MCF 10A (cell line): ENCODE measurements at regions of chr5 and their contacts with region 1.

Region 1: DNA sequence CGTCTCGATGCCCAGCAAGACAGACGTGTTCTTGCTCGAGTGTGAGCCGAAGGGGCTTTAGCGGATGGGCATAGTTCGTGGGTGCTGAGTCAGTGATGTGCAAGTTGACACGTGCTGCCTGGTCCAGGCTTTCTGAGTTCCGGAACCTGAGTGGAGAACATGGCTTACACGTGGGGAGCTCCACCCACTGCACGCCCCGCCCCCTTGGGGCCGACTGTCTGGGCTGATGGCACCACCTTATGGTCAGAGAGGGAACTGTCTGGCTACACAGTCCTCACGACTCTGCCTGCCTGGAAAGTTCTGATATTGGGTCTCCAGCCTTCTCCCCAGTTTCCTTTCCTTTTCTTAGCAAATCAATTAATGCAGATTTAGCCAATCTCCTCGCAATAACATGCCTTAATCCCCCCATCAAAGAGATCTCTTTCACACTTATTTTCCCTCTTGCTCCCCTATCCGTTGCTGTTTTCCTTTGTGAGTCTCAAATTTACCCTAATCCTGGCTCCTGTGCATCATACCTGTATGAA is 3.8 kb upstream of the STC2 start:
- DNase-seq: peak; percentile 96
- H3K4me3 Mint-ChIP-seq: no peak overlapping the region
- H3K27ac Mint-ChIP-seq: peak overlapping the region; percentile 26
- H3K4me1 Mint-ChIP-seq: peaks cover 45% of the 10 kb centered on the region
- H3K27me3 Mint-ChIP-seq: no peaks in the 10 kb centered on the region
- CTCF ChIP-seq: peak; percentile 96

Region 2: GRCh38 chr5:173057062-173057924 is 274.7 kb before region 1 on chr5:
- CTCF ChIA-PET with region 1: interaction called, 3 read pairs
- POLR2A ChIA-PET with region 1: interaction called, 22 read pairs
- intact Hi-C with region 1: loop called (anchors 5 kb)
- DNase-seq: peak; percentile 100
- H3K4me3 Mint-ChIP-seq: peak overlapping the region; percentile 99
- H3K27ac Mint-ChIP-seq: peak overlapping the region; percentile 80
- H3K4me1 Mint-ChIP-seq: peaks cover 16% of the 10 kb centered on the region
- H3K27me3 Mint-ChIP-seq: no peaks in the 10 kb centered on the region
- CTCF ChIP-seq: no peak

Region 3: DNA sequence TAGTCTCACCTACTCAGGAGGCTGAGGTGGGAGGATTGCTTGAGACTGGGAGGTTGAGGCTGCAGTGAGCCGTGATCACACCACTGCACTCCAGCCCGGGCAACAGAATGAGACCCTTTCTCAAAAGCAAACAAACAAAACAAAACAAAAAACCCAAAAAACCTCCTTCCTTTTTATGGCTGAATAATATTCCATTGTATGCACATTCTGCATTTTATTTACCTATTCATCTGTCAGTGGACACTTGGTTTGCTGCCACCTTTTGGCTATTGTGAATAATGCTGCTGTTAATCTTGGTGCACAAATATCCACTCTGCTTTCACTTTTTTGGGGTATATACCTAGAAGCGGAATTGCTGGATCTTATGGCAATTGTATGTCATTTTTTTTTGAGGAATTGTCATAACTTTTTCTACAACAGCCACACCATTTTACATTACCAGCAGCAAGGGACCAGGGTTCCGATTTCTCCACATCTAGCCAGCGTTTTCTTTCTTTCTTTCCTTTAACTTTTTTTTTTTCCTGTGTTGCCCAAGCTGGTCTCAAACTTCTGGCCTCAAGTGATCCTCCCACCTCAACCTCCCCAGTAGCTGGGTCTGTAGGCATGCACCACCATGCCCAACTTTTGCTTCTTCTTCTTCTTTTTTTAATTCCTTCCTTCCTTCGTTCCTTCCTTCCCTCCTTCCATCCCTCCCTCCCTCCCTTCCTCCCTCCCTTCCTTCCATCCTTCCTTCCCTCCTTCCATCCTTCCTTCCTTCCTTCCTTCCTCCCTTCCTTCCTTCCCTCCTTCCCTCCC is 127.6 kb before region 1 on chr5:
- CTCF ChIA-PET with region 1: interaction called, 5 read pairs
- POLR2A ChIA-PET with region 1: interaction called, 12 read pairs
- intact Hi-C with region 1: no loop called
- DNase-seq: peak; percentile 67
- H3K4me3 Mint-ChIP-seq: no peak overlapping the region
- H3K27ac Mint-ChIP-seq: no peak overlapping the region
- H3K4me1 Mint-ChIP-seq: peaks cover 26% of the 10 kb centered on the region
- H3K27me3 Mint-ChIP-seq: peaks cover 33% of the 10 kb centered on the region
- CTCF ChIP-seq: peak; percentile 66

Region 4: DNA sequence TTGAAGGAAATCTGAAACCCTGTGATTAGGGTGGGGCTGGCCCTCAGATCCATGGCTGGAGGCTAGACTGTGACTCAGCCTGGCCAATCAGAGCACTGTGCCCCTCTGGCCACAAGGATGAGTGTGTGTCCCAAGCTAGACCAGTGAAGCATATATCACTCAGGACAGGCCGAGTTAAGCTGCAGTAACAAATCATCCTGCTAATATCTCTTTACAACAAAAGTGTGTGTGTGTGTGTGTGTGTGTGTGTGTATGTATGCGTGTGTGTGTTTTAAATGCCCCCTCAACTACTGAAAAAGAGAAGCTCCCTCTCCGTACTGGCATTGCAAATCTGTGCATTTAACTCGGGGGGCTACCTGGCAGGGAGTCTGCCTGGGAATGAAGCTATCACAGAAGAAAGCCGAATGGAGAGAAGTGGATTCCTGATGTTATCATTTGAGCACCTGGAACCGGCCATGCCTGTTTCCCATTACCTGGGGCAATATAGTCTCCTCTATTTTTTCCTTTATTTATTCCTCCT is 29.4 kb before region 1 on chr5:
- CTCF ChIA-PET with region 1: interaction called, 251 read pairs
- POLR2A ChIA-PET with region 1: interaction called, 164 read pairs
- intact Hi-C with region 1: no loop called
- DNase-seq: peak; percentile 95
- H3K4me3 Mint-ChIP-seq: peak overlapping the region; percentile 33
- H3K27ac Mint-ChIP-seq: peak overlapping the region; percentile 61
- H3K4me1 Mint-ChIP-seq: peaks cover 29% of the 10 kb centered on the region
- H3K27me3 Mint-ChIP-seq: no peaks in the 10 kb centered on the region
- CTCF ChIP-seq: no peak

Region 5: DNA sequence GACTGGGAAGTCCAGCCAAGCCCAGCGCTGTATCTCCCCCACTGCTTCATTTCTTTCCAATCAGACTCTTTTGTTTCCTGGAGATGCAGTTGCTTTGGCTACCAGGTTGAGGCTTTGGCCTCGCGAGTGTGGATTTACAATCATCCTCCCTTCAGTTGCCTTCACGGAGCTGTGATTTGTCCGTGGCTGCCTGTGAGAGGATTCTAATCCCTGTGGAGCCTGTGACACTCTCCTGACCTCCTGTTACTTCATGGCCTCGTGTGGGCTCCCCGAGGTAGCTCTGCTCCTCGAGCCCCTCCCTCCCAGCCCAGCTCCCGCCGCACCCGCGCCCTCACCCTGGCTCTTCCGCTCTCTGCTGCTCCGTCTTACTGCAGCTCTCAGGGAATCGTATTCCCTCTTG is 103.4 kb after region 1 on chr5:
- CTCF ChIA-PET with region 1: no interaction called
- POLR2A ChIA-PET with region 1: no interaction called
- intact Hi-C with region 1: no loop called
- DNase-seq: no peak
- H3K4me3 Mint-ChIP-seq: no peak overlapping the region
- H3K27ac Mint-ChIP-seq: no peak overlapping the region
- H3K4me1 Mint-ChIP-seq: no peaks in the 10 kb centered on the region
- H3K27me3 Mint-ChIP-seq: no peaks in the 10 kb centered on the region
- CTCF ChIP-seq: no peak

Region 6: GRCh38 chr5:173451031-173451430 is 119.0 kb after region 1 on chr5:
- CTCF ChIA-PET with region 1: interaction called, 3 read pairs
- POLR2A ChIA-PET with region 1: interaction called, 6 read pairs
- intact Hi-C with region 1: loop called (anchors 1 kb)
- DNase-seq: peak; percentile 34
- H3K4me3 Mint-ChIP-seq: no peak overlapping the region
- H3K27ac Mint-ChIP-seq: no peak overlapping the region
- H3K4me1 Mint-ChIP-seq: peaks cover 46% of the 10 kb centered on the region
- H3K27me3 Mint-ChIP-seq: no peaks in the 10 kb centered on the region
- CTCF ChIP-seq: peak; percentile 36

Region 7: GRCh38 chr5:173495225-173495904 is 163.3 kb after region 1 on chr5:
- CTCF ChIA-PET with region 1: no interaction called
- POLR2A ChIA-PET with region 1: no interaction called
- intact Hi-C with region 1: loop called (anchors 2 kb)
- DNase-seq: no peak
- H3K4me3 Mint-ChIP-seq: no peak overlapping the region
- H3K27ac Mint-ChIP-seq: no peak overlapping the region
- H3K4me1 Mint-ChIP-seq: peaks cover 9% of the 10 kb centered on the region
- H3K27me3 Mint-ChIP-seq: no peaks in the 10 kb centered on the region
- CTCF ChIP-seq: no peak

Region 8: GRCh38 chr5:173629628-173630027 is 297.6 kb after region 1 on chr5:
- CTCF ChIA-PET with region 1: no interaction called
- POLR2A ChIA-PET with region 1: no interaction called
- intact Hi-C with region 1: no loop called
- DNase-seq: peak; percentile 30
- H3K4me3 Mint-ChIP-seq: no peak overlapping the region
- H3K27ac Mint-ChIP-seq: no peak overlapping the region
- H3K4me1 Mint-ChIP-seq: peaks cover 12% of the 10 kb centered on the region
- H3K27me3 Mint-ChIP-seq: no peaks in the 10 kb centered on the region
- CTCF ChIP-seq: peak; percentile 46

Region 9: DNA sequence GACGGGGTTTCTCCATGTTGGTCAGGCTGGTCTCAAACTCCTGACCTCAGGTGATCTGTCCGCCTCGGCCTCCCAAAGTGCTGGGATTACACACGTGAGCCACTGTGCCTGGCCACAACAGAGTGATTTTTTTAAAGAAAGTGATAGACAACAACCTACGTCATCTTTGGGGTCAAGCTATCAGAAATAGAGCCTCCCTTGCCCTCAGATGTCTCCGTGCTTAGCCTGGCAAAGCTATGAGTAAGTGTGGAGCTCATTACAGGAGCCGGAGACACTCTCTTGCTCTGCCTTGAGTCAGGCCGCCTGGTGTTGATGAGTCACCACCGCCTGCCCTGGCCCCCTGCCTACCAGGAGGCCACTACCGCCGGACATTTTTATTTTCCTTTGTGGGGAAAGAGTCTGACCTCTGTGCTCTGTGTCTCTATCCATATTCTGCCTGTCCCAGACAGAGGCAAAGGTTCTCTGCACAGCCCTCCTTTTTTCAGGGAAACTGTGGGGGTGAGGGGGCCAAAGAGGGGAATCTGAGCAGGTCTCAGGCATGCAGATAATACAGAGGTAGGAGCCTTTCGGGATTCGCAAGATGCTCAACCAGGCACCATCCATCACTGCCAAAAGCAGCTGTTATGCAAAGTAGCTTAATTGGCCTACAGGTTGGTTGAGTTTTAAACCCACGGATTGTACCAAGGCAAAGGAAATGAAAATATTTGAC is 432.5 kb after region 1 on chr5:
- CTCF ChIA-PET with region 1: no interaction called
- POLR2A ChIA-PET with region 1: no interaction called
- intact Hi-C with region 1: loop called (anchors 10 kb)
- DNase-seq: peak; percentile 99
- H3K4me3 Mint-ChIP-seq: peak overlapping the region; percentile 22
- H3K27ac Mint-ChIP-seq: peak overlapping the region; percentile 77
- H3K4me1 Mint-ChIP-seq: peaks cover 40% of the 10 kb centered on the region
- H3K27me3 Mint-ChIP-seq: no peaks in the 10 kb centered on the region
- CTCF ChIP-seq: no peak